Right ventricle myocardium superior (tissue), 1 donor: ENCODE measurements at regions of chr7 and their contacts with region 1.

Region 1: DNA sequence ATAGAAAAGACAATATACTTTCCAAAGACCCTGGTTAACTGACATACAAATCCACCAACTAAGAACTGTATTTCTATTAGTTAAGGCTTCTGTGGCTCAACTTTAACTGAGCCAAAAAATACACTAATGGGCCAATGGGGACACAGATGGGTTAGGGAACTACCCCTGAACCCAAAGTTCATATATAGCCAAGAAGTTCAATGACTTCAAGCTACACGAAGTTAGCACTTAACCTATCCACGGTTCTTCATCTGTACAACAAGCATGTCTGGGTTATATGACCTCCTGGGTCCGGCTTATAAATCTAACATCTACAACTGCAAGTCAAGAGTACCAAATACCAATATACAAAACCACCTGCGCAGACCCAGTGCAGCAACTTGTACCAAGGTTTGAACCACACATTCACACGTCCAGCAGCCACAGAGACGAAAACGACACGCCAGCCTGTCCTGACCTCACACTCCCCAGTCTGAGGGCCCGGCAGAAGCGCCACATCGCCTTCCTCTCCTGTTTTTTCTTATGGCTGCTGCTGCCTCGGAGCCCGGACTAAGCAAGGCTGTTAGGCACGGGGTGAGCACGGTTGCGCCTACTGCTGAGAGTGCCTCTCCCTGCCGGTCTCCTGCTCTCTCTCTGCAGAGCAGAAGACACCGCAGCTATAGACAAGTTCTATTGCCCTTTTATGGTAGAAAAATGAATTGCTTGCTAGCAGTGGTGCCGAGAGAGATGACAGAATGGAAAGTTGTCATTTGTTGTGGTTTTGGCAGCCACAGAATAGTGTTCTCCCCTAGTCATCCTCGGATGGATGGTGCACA is 86.3 kb downstream of the RNF216 start:
- DNase-seq: peak; percentile 61
- ATAC-seq: peak; percentile 7

Region 2: GRCh38 chr7:5354460-5355232 is 340.5 kb before region 1 on chr7:
- intact Hi-C with region 1: loop called (anchors 10 kb)
- DNase-seq: peak; percentile 81
- ATAC-seq: peak; percentile 93

Region 3: GRCh38 chr7:6250364-6250833 is 555.3 kb after region 1 on chr7:
- intact Hi-C with region 1: no loop called
- DNase-seq: no peak
- ATAC-seq: peak; percentile 23